HCT116 (cell line): ENCODE measurements at regions of chr21 and their contacts with region 1.

Region 1: DNA sequence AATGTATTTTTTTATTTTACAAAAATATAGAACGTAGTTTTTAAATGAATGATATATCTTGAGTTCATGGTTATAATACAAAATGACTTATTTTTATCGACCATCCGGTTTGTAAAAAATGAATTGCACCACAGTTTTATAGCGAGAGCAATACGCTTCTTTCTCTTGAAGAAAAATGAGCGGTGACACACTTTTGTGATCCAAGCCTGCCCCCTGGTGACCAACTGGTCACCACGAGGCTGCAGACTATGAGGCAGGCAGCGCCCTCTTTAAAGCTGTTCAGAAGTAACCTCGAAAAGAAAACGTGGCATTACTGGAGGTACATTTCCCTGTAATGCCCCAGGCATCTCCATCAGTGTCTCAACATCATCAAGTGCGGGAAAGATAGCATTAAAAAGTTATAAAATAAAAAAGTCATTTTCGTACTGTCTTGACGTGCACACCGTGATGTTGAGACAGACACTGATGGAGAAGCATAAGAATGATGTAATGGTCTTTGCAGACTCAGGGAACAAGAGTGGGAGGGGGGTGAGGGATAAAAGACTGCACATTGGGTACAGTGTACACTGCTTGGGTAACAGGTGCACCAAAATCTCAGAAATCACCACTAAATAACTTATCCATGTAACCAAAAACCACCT is 734.2 kb upstream of the ADAMTS5 start:
- DNase-seq: no peak
- ATAC-seq: no peak
- H3K4me3 ChIP-seq: no peak overlapping the region
- H3K27ac ChIP-seq: no peak overlapping the region
- H3K4me1 ChIP-seq: no peaks in the 10 kb centered on the region
- H3K27me3 ChIP-seq: no peaks in the 10 kb centered on the region
- CTCF ChIP-seq: peak in 1 of 3 experiments; percentile 37; a peak in 1 of 6 replicates
- POLR2A ChIP-seq: no peak
- RAD21 ChIP-seq: no peak

Region 2: GRCh38 chr21:26850108-26850643 is 850.9 kb before region 1 on chr21:
- CTCF ChIA-PET with region 1: no interaction called
- POLR2A ChIA-PET with region 1: no interaction called
- RAD21 ChIA-PET with region 1: no interaction called
- intact Hi-C with region 1: loop called (anchors 2 kb)
- DNase-seq: peak; percentile 2
- ATAC-seq: no peak
- H3K4me3 ChIP-seq: no peak overlapping the region
- H3K27ac ChIP-seq: no peak overlapping the region
- H3K4me1 ChIP-seq: no peaks in the 10 kb centered on the region
- H3K27me3 ChIP-seq: no peaks in the 10 kb centered on the region
- CTCF ChIP-seq: peak in 2 of 3 experiments; percentile 38 to 45; a peak in 3 of 6 replicates
- POLR2A ChIP-seq: no peak
- RAD21 ChIP-seq: peak; percentile 23; the same call in 1 of the 2 replicates

Region 3: DNA sequence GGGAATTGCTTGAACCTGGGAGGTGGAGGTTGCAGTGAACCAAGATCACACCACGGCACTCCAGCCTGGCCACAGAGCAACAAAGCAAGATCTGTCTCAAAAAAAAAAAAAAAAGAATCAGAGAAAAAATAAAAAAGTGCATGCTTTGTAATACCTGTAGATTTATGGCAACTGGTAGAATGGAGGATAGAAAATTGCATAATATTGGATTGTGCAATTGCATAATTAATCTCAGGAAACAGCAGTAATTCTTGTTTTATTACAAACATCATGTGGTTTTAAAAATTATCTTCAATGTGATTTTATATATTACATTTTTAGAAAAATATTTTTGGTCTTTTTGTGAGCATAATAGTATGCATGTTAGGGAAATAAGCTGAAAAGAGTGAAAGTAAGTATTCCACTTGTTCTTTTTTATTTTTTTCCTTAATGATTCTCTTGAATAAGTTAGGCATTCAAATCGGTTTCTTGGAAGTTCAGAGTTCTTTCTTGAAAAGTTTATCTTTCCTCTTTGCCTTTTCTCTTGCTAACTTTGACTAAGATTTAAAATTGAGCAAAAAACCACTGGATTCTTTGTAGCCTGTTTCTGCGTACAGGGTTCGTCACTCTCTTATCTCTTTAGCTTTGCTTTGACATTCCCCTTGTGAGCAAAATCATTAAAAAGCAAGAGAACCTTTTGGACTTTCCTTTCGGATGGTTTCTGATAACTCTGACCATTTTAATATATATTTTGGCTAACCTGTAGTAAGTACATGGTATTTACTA is 606.7 kb before region 1 on chr21:
- CTCF ChIA-PET with region 1: no interaction called
- POLR2A ChIA-PET with region 1: no interaction called
- RAD21 ChIA-PET with region 1: no interaction called
- intact Hi-C with region 1: no loop called
- DNase-seq: no peak
- ATAC-seq: no peak
- H3K4me3 ChIP-seq: no peak overlapping the region
- H3K27ac ChIP-seq: no peak overlapping the region
- H3K4me1 ChIP-seq: no peaks in the 10 kb centered on the region
- H3K27me3 ChIP-seq: no peaks in the 10 kb centered on the region
- CTCF ChIP-seq: no peak
- POLR2A ChIP-seq: no peak
- RAD21 ChIP-seq: no peak